ENCODE measurements at regions of chr2 and their contacts with region 1.

Region 1: DNA sequence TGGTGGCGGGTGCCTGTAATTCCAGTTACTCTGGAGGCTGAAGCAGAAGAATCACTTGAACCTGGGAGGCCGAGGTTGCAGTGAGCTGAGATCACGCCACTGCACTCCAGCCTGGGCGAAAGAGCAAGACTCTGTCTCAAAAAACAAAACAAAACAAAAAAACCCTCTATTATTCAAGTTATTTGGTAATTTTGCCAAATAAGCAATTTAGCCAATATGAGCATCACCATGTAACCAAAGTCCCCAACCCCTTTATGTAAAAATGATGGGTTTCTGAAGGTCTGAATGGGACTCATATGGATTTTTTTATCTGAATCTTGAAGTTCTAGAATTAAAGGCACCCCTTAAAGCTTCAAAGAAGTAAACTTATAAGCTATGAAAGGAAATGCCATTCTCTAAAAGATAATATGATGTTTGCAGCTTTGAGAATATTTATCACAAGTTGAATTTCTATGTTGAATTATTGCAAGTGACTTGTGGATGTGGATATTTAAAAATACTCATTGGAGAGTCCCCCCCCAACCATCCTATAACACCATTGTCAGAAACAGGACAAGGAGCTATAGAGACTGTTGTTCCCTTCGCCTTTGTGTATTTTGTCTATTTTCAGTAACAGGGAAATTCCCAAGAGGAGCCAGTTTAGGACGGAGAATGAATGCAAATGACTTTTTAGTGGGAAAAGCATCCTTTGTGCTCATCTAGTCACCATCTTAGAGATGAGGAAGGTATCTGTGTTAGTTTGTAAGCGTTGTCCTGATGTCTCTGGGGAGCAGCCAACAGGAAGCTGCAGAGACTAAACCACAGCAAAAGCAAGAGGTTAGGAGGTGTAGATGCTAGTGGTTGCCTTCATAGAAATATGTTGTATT is 68.3 kb downstream of the TET3 start:
- DNase-seq: no peak
- CTCF ChIP-seq: no peak

Region 2: GRCh38 chr2:74025971-74026612 is 26.9 kb before region 1 on chr2:
- CTCF ChIA-PET with region 1: no interaction called
- POLR2A ChIA-PET with region 1: no interaction called
- DNase-seq: no peak
- CTCF ChIP-seq: no peak

Region 3: DNA sequence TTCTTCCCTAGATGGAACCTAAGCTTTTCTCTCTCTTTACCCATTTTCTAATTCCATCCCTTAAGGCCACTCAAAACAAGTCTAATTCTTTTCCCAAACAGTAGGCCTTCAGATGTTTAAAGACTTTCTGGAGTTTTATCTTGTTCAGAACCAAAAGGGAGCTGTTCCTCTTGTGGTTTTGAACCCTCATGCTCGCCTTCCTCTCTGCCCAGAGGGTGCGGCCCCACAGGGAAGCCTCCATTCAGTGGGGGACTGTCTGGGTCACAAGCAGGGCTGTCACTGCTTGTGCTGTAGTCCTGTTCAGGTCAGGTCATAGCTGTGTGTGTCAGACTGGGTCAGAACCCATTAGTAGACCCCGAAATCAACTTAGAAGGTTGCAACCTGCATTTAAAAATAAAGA is 11.8 kb before region 1 on chr2:
- CTCF ChIA-PET with region 1: interaction called, 17 read pairs
- POLR2A ChIA-PET with region 1: no interaction called
- DNase-seq: no peak
- CTCF ChIP-seq: no peak